ENCODE measurements at regions of chr3 and their contacts with region 1.

Region 1: DNA sequence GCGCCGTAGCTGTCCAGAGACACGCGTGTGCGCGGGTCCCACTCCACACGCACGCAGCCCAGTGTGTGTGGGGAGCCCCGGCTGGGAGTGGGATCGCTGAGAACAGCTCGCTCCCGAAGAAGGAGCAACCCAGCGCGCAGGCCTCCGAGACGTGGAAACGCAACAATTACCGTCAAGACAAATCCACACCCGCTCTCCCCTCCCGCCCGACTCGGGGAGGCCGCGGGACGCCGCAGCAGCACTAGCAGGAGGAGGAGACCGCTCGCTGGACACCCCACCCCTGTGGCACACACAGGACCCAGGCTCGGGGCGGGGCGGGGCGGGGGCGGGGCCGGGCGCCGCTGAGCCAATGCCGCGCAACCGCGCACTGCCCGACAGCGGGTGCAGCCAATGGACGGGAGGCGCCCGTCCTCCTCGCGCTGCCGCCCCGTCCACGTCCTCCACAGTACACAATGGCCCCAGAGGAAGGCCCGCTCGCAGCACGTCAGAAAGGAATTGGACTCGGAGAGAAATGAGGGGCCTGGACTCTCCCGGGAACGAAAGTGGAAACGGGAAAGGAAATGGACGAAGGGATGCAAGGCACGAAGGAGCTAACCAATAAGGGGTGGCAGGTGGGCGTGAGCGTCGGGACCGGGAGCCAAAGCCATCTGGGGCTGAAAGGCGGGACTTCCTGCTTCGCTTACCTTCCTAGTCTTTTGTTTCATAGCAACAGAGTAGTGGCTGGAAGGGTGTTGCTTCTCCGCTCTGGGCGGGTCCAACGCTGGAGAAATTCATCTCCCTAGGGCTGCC is at the start of gene CBLB:
- DNase-seq: peak; percentile 91
- H3K4me3 Mint-ChIP-seq: peak within 1 kb of the TSS; percentile 94
- H3K27ac Mint-ChIP-seq: peak within 1 kb of the TSS; percentile 94
- H3K4me1 Mint-ChIP-seq: peaks cover 38% of the 10 kb centered on the region
- H3K27me3 Mint-ChIP-seq: no peaks in the 10 kb centered on the region
- total RNA-seq, gene CBLB: 86.1 to 88.2 TPM

Region 2: GRCh38 chr3:105686278-105686897 is 182.5 kb before region 1 on chr3:
- CTCF ChIA-PET with region 1: interaction called, 3 read pairs
- POLR2A ChIA-PET with region 1: interaction called, 4 read pairs
- intact Hi-C with region 1: loop called (anchors 2 kb)
- DNase-seq: no peak
- H3K4me3 Mint-ChIP-seq: no peak overlapping the region
- H3K27ac Mint-ChIP-seq: peak overlapping the region; percentile 23
- H3K4me1 Mint-ChIP-seq: peaks cover 24% of the 10 kb centered on the region
- H3K27me3 Mint-ChIP-seq: no peaks in the 10 kb centered on the region

Region 3: DNA sequence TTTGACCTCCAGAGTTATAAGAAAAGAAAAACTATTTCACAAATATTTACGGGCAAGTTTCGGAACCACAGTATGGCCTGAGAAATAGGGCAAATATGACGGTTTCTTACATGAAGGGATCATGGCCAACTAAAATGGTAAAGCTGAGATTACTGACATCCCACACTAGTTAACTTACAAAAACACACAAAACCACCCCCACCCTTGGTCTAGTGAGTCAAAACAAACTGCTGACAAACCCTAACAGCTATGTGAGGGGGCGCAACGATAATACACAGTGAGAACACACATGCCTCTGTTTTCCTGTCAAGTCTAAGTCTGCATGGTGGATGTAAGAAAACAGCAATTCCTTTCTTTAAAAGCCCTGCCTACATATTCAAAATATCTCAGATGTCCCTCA is 32.4 kb before region 1 on chr3:
- CTCF ChIA-PET with region 1: interaction called, 7 read pairs
- POLR2A ChIA-PET with region 1: interaction called, 15 read pairs
- intact Hi-C with region 1: loop called (anchors 1 kb)
- DNase-seq: peak; percentile 78
- H3K4me3 Mint-ChIP-seq: peak overlapping the region; percentile 58
- H3K27ac Mint-ChIP-seq: peak overlapping the region; percentile 80
- H3K4me1 Mint-ChIP-seq: peaks cover 74% of the 10 kb centered on the region
- H3K27me3 Mint-ChIP-seq: no peaks in the 10 kb centered on the region

Region 4: DNA sequence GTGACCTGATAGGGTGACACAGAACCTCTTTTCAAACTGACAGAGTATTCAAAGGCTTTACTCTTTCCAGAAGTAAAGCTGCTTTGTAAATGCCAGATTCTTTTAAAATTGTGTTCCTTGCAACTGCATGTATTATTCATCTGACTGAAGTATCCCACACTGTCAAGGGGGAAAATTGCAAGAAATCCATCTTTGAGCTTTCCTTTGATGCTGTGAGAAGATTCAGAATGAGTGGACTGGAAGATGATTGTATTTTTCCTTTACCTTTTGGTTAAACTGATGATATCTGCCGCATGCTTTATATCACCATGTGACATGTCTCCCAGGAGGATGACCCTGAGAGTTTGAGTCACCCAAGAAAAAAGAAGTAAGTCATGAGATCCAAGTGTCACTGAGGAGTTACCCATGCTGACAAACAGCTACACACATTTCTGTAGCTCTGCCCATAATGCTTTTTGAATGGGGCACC is 250.7 kb after region 1 on chr3:
- CTCF ChIA-PET with region 1: no interaction called
- POLR2A ChIA-PET with region 1: no interaction called
- intact Hi-C with region 1: loop called (anchors 5 kb)
- DNase-seq: peak; percentile 42
- H3K4me3 Mint-ChIP-seq: no peak overlapping the region
- H3K27ac Mint-ChIP-seq: peak overlapping the region; percentile 50
- H3K4me1 Mint-ChIP-seq: peaks cover 21% of the 10 kb centered on the region
- H3K27me3 Mint-ChIP-seq: no peaks in the 10 kb centered on the region